CD8-positive, alpha-beta T cell (primary cell): ENCODE measurements at regions of chr21 and their contacts with region 1.

Region 1: GRCh38 chr21:17780539-17780938 is 38.6 kb downstream of the C21orf91 start:
- DNase-seq: peak in 7 of 9 experiments; percentile 27 to 89 (median 59)
- ATAC-seq: peak; percentile 59
- H3K4me3 ChIP-seq: no peak overlapping the region
- H3K4me3 Mint-ChIP-seq: peak overlapping the region; percentile 67
- H3K27ac ChIP-seq: peak overlapping the region in 1 of 2 experiments; percentile 73
- H3K27ac Mint-ChIP-seq: peak overlapping the region; percentile 93
- H3K4me1 ChIP-seq: peaks cover 73% of the 10 kb centered on the region
- H3K4me1 Mint-ChIP-seq: peaks cover 87% of the 10 kb centered on the region
- H3K27me3 ChIP-seq: no peaks in the 10 kb centered on the region
- H3K27me3 Mint-ChIP-seq: no peaks in the 10 kb centered on the region
- CTCF ChIP-seq: no peak

Region 2: GRCh38 chr21:17611414-17612022 is 169.0 kb before region 1 on chr21:
- CTCF ChIA-PET with region 1: interaction called, 3 read pairs
- POLR2A ChIA-PET with region 1: interaction called, 3 read pairs
- intact Hi-C with region 1: loop called (anchors 2 to 5 kb)
- DNase-seq: peak; percentile 52 to 92 (median 78)
- ATAC-seq: peak; percentile 69
- H3K4me3 ChIP-seq: peak overlapping the region; percentile 78 to 92
- H3K4me3 Mint-ChIP-seq: peak overlapping the region; percentile 91
- H3K27ac ChIP-seq: peak overlapping the region; percentile 67 to 79
- H3K27ac Mint-ChIP-seq: peak overlapping the region; percentile 96
- H3K4me1 ChIP-seq: peaks cover 12% of the 10 kb centered on the region
- H3K4me1 Mint-ChIP-seq: peaks cover 26% of the 10 kb centered on the region
- H3K27me3 ChIP-seq: no peaks in the 10 kb centered on the region
- H3K27me3 Mint-ChIP-seq: no peaks in the 10 kb centered on the region
- CTCF ChIP-seq: no peak

Region 3: GRCh38 chr21:17741806-17742550 is 38.6 kb before region 1 on chr21:
- CTCF ChIA-PET with region 1: no interaction called
- POLR2A ChIA-PET with region 1: interaction called, 3 read pairs
- intact Hi-C with region 1: loop called in 1 of 2 experiments (anchors 5 kb)
- DNase-seq: no peak
- ATAC-seq: no peak
- H3K4me3 ChIP-seq: no peak overlapping the region
- H3K4me3 Mint-ChIP-seq: no peak overlapping the region
- H3K27ac ChIP-seq: no peak overlapping the region
- H3K27ac Mint-ChIP-seq: no peak overlapping the region
- H3K4me1 ChIP-seq: no peaks in the 10 kb centered on the region
- H3K4me1 Mint-ChIP-seq: no peaks in the 10 kb centered on the region
- H3K27me3 ChIP-seq: no peaks in the 10 kb centered on the region
- H3K27me3 Mint-ChIP-seq: no peaks in the 10 kb centered on the region
- CTCF ChIP-seq: no peak

Region 4: DNA sequence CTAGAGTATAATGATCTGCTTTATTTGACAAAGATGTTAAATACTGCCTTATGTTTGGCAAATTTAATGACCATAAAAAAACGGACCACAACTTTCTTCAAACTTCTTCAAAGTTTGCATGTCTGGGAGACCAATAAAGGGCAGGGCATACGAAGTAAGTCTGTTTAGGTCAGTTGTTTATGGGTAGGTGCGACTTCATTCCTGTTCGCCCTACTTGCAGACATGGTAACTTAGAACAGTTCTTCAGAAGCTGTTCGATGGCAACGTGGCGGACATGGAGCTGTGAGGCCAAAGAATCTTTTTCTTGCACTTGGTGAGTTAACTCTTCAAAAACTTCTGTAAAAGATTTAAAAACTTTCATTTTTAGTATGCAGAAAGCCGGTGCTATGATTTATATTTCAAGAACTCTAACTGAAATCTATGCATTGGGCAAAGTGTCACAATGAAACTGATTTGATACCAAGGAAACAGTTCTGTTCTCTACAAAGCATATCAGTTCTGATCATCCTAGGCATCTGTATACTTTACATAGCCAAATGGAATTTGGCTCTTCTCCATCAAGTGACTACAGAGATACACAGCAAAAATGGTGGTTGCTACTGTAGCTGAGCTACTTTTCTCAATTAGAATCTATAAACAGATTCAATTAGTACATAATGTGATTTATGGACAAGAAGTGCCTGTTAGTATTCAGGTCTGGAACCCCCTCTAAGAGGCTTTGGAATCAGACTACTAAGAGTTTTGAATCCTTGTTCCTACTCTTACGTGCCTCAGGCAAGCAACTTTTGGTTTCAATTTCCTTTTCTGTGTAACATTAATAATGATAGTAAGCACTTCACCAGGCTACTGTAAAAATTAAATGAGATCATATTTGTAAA is 12.9 kb after region 1 on chr21:
- CTCF ChIA-PET with region 1: interaction called, 3 read pairs
- POLR2A ChIA-PET with region 1: interaction called, 9 read pairs
- intact Hi-C with region 1: loop called in 1 of 2 experiments (anchors 1 kb)
- DNase-seq: peak in 2 of 9 experiments; percentile 52 to 71
- ATAC-seq: peak; percentile 52
- H3K4me3 ChIP-seq: peak overlapping the region; percentile 31 to 45
- H3K4me3 Mint-ChIP-seq: peak overlapping the region; percentile 76
- H3K27ac ChIP-seq: peak overlapping the region; percentile 61 to 90
- H3K27ac Mint-ChIP-seq: peak overlapping the region; percentile 92
- H3K4me1 ChIP-seq: peaks cover 55% of the 10 kb centered on the region
- H3K4me1 Mint-ChIP-seq: peaks cover 75% of the 10 kb centered on the region
- H3K27me3 ChIP-seq: no peaks in the 10 kb centered on the region
- H3K27me3 Mint-ChIP-seq: no peaks in the 10 kb centered on the region
- CTCF ChIP-seq: no peak